K562 (cell line): ENCODE measurements at regions of chr9 and their contacts with region 1.

Region 1: DNA sequence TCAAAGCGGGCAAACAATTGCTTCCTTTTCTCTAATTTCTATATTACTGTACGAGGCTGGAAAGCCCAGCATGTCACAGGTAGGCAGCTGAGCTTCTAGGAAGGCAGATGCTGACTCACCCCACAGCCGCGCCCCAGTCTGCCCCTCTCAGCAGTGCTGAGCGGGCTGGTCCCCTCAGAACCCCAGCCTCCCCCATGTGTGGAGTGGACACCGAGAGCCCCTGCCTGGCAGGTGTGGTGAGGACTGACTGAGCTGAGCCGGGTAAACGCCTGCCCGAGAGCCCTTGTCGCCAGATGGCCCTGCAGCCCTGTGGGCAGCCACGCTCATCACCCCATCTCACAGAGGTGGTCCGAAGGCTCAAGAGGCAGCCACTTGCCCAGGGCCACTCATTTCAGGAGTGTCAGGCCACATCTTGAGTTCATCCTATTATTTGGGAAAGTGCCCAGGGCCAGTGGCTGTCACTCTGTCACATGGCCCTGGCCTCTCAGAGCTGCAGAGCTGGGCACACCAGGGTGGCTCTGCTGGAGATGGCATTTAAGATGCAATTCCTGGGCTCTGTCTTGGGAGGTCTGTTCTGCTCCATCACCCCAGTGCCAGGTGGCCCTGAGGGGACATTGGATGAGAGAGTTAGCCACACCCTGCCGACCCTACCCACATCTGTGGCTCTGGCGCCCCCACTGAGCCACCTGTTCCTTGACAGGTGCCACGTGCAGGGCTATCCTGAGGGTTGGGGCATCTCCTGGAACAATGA is 12.4 kb downstream of the CARD19 start:
- DNase-seq: peak in 2 of 4 experiments; percentile 39 to 46
- ATAC-seq: peak; percentile 64
- H3K4me3 ChIP-seq: no peak overlapping the region
- H3K27ac ChIP-seq: no peak overlapping the region
- H3K4me1 ChIP-seq: peaks cover 24 to 44% of the 10 kb centered on the region in 2 experiments
- H3K27me3 ChIP-seq: no peaks in the 10 kb centered on the region
- CTCF ChIP-seq: no peak
- EP300 ChIP-seq: no peak
- POLR2A ChIP-seq: no peak
- RAD21 ChIP-seq: no peak

Region 2: GRCh38 chr9:93003552-93004407 is 104.7 kb before region 1 on chr9:
- CTCF ChIA-PET with region 1: interaction called, 3 read pairs
- POLR2A ChIA-PET with region 1: interaction called, 4 read pairs
- in situ Hi-C with region 1: no loop called
- intact Hi-C with region 1: loop called (anchors 5 kb)
- DNase-seq: peak; percentile 70 to 78 (median 76)
- ATAC-seq: peak; percentile 97
- H3K4me3 ChIP-seq: peak overlapping the region; percentile 33
- H3K27ac ChIP-seq: no peak overlapping the region
- H3K4me1 ChIP-seq: peaks cover 9 to 13% of the 10 kb centered on the region in 2 experiments; a peak in 4 of 5 replicates
- H3K27me3 ChIP-seq: peaks cover 0 to 24% of the 10 kb centered on the region in 2 experiments; a peak in 2 of 5 replicates
- CTCF ChIP-seq: peak; percentile 91 to 98 (median 94)
- EP300 ChIP-seq: no peak
- POLR2A ChIP-seq: no peak
- RAD21 ChIP-seq: peak; percentile 68 to 88

Region 3: GRCh38 chr9:93154315-93154903 is 45.9 kb after region 1 on chr9:
- CTCF ChIA-PET with region 1: interaction called, 3 read pairs
- POLR2A ChIA-PET with region 1: no interaction called
- in situ Hi-C with region 1: no loop called
- intact Hi-C with region 1: loop called (anchors 5 kb)
- DNase-seq: peak; percentile 66 to 80 (median 68)
- ATAC-seq: peak; percentile 92
- H3K4me3 ChIP-seq: no peak overlapping the region
- H3K27ac ChIP-seq: no peak overlapping the region
- H3K4me1 ChIP-seq: peaks cover 0 to 6% of the 10 kb centered on the region in 2 experiments; a peak in 1 of 5 replicates
- H3K27me3 ChIP-seq: peaks cover 2 to 16% of the 10 kb centered on the region in 2 experiments; a peak in 3 of 5 replicates
- CTCF ChIP-seq: peak; percentile 83 to 94 (median 83)
- EP300 ChIP-seq: no peak
- POLR2A ChIP-seq: no peak
- RAD21 ChIP-seq: peak in 1 of 2 experiments; percentile 63; a peak in 2 of 4 replicates

Region 4: DNA sequence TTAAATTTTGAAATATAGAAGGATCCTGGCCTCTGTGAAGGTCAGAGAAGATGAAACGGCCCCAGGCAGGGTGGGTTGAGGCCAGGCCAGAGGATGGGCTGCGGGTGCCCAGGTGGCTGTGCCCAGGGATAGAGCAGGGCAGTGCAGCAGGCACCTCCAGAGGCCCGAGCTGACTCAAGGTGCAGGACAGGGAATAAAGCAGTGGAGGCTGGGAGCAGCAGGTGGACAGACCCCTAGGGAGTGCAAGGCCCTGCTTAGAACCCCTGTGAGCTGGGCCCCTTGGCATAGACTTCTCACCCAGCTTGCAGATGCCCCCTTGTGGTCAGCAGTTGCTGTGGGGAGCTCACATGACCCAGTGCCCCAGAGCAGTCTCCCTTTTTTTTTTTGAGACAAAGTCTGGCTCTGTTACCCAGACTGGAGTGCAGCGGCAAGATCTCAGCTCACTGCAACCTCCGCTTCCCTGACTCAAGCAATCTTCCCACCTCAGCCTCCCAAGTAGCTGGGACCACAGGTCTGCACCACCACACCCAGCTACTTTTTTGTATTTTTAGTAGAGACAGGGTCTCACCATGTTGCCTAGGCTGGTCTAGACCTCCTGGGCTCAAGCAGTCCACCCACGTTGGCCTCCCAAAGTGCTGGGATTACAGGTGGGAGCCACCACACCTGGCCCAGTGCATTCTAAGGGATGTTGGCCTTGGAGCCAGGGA is 194.2 kb after region 1 on chr9:
- CTCF ChIA-PET with region 1: interaction called, 11 read pairs
- POLR2A ChIA-PET with region 1: no interaction called
- in situ Hi-C with region 1: loop called (anchors 10 kb)
- intact Hi-C with region 1: no loop called
- DNase-seq: peak; percentile 43 to 55 (median 54)
- ATAC-seq: peak; percentile 73
- H3K4me3 ChIP-seq: no peak overlapping the region
- H3K27ac ChIP-seq: no peak overlapping the region
- H3K4me1 ChIP-seq: peaks cover 0 to 24% of the 10 kb centered on the region in 2 experiments; a peak in 1 of 5 replicates
- H3K27me3 ChIP-seq: peaks cover 42 to 88% of the 10 kb centered on the region in 2 experiments
- CTCF ChIP-seq: peak; percentile 45 to 56 (median 49); a peak in 5 of 6 replicates
- EP300 ChIP-seq: no peak
- POLR2A ChIP-seq: no peak
- RAD21 ChIP-seq: peak in 1 of 2 experiments; percentile 54; a peak in 2 of 4 replicates